IMR-90 (cell line): ENCODE measurements at regions of chr17 and their contacts with region 1.

Region 1: GRCh38 chr17:76582660-76583059 is 3.0 kb downstream of the ST6GALNAC2 start:
- DNase-seq: no peak
- ATAC-seq: no peak
- H3K4me3 ChIP-seq: no peak overlapping the region
- H3K27ac ChIP-seq: no peak overlapping the region
- H3K4me1 ChIP-seq: peaks cover 2% of the 10 kb centered on the region; the same call in 1 of the 2 replicates
- H3K27me3 ChIP-seq: peaks cover 26% of the 10 kb centered on the region
- CTCF ChIP-seq: no peak
- POLR2A ChIP-seq: no peak
- RAD21 ChIP-seq: no peak

Region 2: DNA sequence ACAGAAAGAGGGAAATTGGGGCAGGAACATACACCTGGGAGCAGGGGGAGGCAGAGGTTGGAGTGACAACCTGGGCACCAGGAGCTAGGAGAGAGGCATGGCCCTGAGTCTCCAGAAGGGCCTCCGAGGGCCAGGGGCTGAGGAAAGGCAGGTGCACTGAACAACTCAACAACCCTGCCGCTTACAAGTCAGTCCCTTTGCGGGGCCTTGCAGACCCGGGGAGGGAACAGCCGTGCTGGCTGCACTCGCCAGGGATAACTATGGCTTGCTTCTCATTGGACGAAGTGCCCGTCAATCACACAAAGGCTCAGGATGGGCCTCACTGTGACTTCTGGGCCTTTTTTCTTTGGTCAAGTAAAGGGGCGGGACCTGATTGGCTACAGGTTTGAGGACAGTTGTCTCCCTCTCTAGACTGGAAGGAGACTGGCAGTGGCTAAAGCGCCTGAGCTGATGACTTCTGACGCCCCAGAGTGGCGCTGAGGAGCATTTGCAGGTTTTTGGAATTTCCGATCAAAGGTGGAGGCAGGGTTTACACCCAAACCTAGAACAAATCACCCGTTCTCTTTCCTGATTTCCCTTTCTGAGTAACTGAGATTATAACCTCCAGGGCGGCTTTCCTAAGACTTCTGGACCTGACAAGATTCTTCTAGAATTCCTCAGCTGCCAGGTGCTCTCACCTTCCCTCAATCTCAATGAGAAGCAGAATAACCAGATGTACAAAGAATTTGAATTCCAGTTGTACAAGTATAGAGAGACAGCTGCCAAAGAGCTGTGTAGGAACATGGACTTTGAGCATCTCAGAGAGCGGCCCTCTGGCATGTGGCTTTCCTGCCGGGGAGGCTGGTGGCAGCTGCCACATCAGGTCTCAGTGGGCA is 30.6 kb after region 1 on chr17:
- CTCF ChIA-PET with region 1: no interaction called
- POLR2A ChIA-PET with region 1: interaction called, 19 read pairs
- dilution Hi-C with region 1: no loop called
- in situ Hi-C with region 1: no loop called
- intact Hi-C with region 1: no loop called
- DNase-seq: no peak
- ATAC-seq: no peak
- H3K4me3 ChIP-seq: no peak overlapping the region
- H3K27ac ChIP-seq: no peak overlapping the region
- H3K4me1 ChIP-seq: no peaks in the 10 kb centered on the region
- H3K27me3 ChIP-seq: 0 out of 2 replicates have a peak, but pooled peaks cover 2% of the 10 kb centered on the region
- CTCF ChIP-seq: no peak
- POLR2A ChIP-seq: no peak
- RAD21 ChIP-seq: no peak